CD4-positive, alpha-beta memory T cell (primary cell): ENCODE measurements at regions of chr3 and their contacts with region 1.

Region 1: DNA sequence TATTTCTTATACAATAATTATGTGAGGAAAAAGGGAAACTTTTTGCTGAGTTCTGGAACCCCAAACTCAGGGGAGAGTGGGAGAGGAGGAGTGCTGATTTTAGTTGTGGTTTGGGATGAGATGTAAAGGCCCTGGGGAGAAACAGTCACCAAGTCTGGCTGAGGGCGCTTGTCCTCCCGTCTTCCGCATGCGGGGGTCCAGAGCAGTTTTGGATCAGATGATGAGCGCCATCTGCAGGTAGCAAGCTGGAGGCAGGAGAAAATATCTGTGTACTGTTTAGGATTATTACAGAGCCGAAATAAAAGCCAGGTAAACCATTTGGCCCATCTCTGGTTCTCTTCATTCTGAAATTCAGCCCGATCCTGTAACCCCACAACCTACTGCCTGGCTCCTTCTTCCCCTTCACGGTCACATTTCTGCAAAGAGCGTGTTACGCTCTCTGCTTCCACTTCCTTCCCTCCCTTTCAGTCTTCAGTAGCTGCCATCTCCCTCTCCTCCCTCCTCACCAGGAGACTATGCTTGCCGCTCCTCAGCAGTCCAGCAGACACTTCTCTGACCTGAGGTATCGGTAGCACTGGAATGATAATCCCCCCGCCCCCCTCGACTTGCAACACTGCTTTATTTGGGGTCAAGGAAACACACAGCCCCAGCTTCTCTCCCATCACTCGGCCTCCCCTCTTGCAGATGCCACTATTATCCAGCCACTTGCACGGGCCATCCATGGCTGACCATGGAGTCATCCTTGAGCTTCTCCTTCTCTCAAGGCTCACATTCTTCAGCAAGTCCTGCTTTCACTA is 1.4 kb upstream of the PARP14 start:
- DNase-seq: peak; percentile 79 to 86 (median 79)
- H3K4me3 ChIP-seq: peak overlapping the region; percentile 81 to 89
- H3K4me3 Mint-ChIP-seq: peak overlapping the region; percentile 84 to 98 (median 96)
- H3K27ac ChIP-seq: peak overlapping the region; percentile 96
- H3K27ac Mint-ChIP-seq: peak overlapping the region; percentile 85 to 98 (median 97)
- H3K4me1 ChIP-seq: peaks cover 45% of the 10 kb centered on the region
- H3K4me1 Mint-ChIP-seq: peaks cover 38 to 61% (median 51%) of the 10 kb centered on the region in 4 donors
- H3K27me3 ChIP-seq: no peaks in the 10 kb centered on the region
- H3K27me3 Mint-ChIP-seq: no peaks in the 10 kb centered on the region

Region 2: GRCh38 chr3:122101646-122102045 is 577.6 kb before region 1 on chr3:
- CTCF ChIA-PET with region 1: no interaction called
- POLR2A ChIA-PET with region 1: no interaction called
- intact Hi-C with region 1: loop called (anchors 5 kb)
- DNase-seq: peak in 4 of 5 donors; percentile 58 to 67 (median 60)
- H3K4me3 ChIP-seq: no peak overlapping the region
- H3K4me3 Mint-ChIP-seq: peak overlapping the region in 1 of 8 donors; percentile 37
- H3K27ac ChIP-seq: no peak overlapping the region
- H3K27ac Mint-ChIP-seq: no peak overlapping the region
- H3K4me1 ChIP-seq: peaks cover 7% of the 10 kb centered on the region
- H3K4me1 Mint-ChIP-seq: peaks cover 8 to 18% (median 9%) of the 10 kb centered on the region in 4 donors
- H3K27me3 ChIP-seq: peaks cover 8% of the 10 kb centered on the region
- H3K27me3 Mint-ChIP-seq: no peaks in the 10 kb centered on the region

Region 3: DNA sequence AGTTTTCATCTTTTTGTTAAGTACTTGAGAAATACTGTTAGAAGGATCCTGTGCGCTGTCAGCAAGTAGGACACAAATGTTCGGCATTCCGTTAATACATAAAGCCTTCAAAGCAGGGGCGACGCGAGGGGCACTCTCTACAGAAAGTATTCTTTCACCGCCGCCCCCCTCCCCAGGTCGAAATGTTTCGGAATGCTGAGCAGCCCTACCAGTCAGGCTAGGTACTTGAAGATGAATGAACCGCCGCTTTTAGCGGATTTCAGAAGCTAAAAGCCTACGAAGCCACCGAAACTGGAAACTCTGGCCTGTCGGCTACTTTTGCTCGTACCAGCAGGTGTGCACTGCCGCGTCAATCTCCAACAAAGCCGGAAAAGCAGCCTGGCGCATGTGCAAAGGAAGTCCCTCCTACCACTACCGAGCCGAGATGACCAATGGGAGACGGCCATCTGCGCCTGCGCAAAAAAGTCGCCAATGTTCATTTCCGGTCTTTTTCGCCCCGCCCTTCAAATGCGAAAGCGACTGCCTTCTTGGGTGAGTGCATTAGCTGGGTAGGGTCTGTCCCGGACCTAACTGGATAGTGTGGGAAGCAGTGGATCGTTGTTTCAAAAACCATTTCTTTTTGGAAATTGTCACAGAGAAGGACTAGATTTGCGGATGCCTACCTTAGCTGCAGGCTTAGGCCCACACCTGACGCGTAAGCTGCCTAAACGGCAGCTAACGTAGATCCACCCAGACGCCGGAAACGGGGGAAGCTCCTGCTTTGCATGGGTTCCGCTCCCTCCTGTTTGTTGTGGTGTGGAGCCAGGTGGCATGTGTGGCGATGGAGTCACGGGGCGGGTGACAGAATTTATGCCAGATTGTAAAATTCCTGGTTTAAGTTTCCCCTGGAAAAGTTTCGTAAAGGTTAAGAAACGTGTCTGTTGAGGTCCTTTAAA is 263.3 kb before region 1 on chr3 and contains the start of gene WDR5B:
- CTCF ChIA-PET with region 1: interaction called, 16 read pairs
- POLR2A ChIA-PET with region 1: interaction called, 15 read pairs
- intact Hi-C with region 1: loop called (anchors 1 kb)
- DNase-seq: peak; percentile 98 to 99 (median 99)
- H3K4me3 ChIP-seq: peak within 1 kb of the TSS; percentile 61 to 63
- H3K4me3 Mint-ChIP-seq: peak within 1 kb of the TSS; percentile 96 to 100 (median 98)
- H3K27ac ChIP-seq: peak within 1 kb of the TSS; percentile 93
- H3K27ac Mint-ChIP-seq: peak within 1 kb of the TSS; percentile 97 to 100 (median 100)
- H3K4me1 ChIP-seq: peaks cover 35% of the 10 kb centered on the region
- H3K4me1 Mint-ChIP-seq: peaks cover 38 to 71% (median 49%) of the 10 kb centered on the region in 4 donors
- H3K27me3 ChIP-seq: no peaks in the 10 kb centered on the region
- H3K27me3 Mint-ChIP-seq: no peaks in the 10 kb centered on the region
- total RNA-seq, gene WDR5B: 19.2 to 19.4 TPM

Region 4: GRCh38 chr3:122466701-122467240 is 212.5 kb before region 1 on chr3:
- CTCF ChIA-PET with region 1: no interaction called
- POLR2A ChIA-PET with region 1: no interaction called
- intact Hi-C with region 1: no loop called
- DNase-seq: no peak
- H3K4me3 ChIP-seq: no peak overlapping the region
- H3K4me3 Mint-ChIP-seq: no peak overlapping the region
- H3K27ac ChIP-seq: no peak overlapping the region
- H3K27ac Mint-ChIP-seq: no peak overlapping the region
- H3K4me1 ChIP-seq: peaks cover 21% of the 10 kb centered on the region
- H3K4me1 Mint-ChIP-seq: peaks cover 18 to 40% (median 32%) of the 10 kb centered on the region in 4 donors
- H3K27me3 ChIP-seq: no peaks in the 10 kb centered on the region
- H3K27me3 Mint-ChIP-seq: no peaks in the 10 kb centered on the region

Region 5: DNA sequence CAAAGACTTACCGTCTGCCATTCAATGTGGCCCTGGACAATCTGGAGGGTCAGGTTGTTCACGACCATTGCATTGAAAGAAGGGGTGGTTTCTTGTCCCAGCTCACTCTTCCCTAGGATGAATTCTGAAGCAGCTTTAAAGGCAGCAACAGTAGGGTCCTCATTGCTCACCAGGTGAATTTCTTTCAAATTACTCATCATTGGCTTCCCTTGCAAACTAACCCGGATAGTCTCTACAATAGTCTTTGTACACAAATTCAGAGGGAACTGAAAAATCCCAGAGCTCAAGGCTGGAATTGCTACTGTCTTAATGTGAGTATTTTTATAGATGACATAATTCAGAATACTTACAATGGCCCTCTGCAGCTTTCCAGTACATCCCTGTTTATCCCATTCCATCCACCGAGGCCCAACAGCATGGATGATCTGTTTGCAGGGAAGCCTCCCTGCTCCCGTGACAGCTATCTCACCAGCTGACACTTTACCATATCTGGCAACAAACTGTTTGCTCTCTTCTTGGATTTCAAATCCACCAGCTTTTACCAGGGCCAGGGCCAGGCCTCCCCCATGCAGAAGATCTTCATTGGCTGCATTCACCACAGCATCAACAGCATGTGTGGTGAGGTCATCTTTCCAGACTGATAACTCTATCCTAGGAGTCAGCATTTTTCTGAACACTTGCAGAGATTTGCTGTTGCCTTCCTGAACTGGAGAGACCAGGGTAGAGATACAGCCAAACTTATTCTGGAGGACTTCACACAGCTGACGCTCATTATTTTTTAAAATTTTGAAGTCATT is 123.8 kb before region 1 on chr3:
- CTCF ChIA-PET with region 1: interaction called, 369 read pairs
- POLR2A ChIA-PET with region 1: interaction called, 30 read pairs
- intact Hi-C with region 1: loop called (anchors 1 kb)
- DNase-seq: no peak
- H3K4me3 ChIP-seq: no peak overlapping the region
- H3K4me3 Mint-ChIP-seq: no peak overlapping the region
- H3K27ac ChIP-seq: no peak overlapping the region
- H3K27ac Mint-ChIP-seq: peak overlapping the region in 1 of 7 donors; percentile 81
- H3K4me1 ChIP-seq: no peaks in the 10 kb centered on the region
- H3K4me1 Mint-ChIP-seq: peaks cover 16 to 26% (median 23%) of the 10 kb centered on the region in 4 donors
- H3K27me3 ChIP-seq: no peaks in the 10 kb centered on the region
- H3K27me3 Mint-ChIP-seq: no peaks in the 10 kb centered on the region

Region 6: DNA sequence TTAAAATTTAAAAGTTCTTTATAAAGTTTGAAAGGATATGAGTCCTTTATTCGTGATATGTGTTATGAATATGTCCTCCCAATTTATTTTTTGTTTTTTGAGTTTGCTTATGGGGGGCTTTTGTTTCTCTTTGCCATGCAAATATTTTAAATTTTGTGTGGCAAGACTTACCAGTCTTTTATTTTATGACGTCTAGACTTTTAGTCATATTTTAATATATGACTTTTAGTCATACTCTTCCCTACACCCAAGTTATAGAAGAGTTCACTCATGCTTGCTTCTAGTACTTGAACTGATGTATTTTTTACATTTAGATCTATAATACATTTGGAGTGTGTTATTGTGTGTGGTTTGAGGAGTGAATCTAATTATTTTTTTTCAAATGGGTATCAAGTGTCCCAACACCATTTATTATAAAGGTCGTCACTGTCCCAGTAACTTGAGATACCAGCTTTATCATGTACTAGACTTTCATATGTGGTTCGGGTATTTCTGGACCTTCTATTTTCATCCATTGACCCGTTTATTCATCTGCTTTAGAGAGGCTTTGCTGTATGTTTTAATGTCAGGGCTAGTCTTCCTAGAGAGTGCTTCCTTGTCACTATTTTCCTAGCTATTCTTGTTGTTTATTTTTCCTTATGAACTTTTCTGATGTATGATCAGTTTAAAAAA is 101.1 kb before region 1 on chr3:
- CTCF ChIA-PET with region 1: interaction called, 25 read pairs
- POLR2A ChIA-PET with region 1: interaction called, 13 read pairs
- intact Hi-C with region 1: loop called (anchors 1 kb)
- DNase-seq: no peak
- H3K4me3 ChIP-seq: peak overlapping the region; percentile 18 to 66
- H3K4me3 Mint-ChIP-seq: peak overlapping the region; percentile 99 to 100 (median 100)
- H3K27ac ChIP-seq: peak overlapping the region; percentile 57
- H3K27ac Mint-ChIP-seq: peak overlapping the region; percentile 53 to 99 (median 98)
- H3K4me1 ChIP-seq: peaks cover 44% of the 10 kb centered on the region
- H3K4me1 Mint-ChIP-seq: peaks cover 31 to 82% (median 44%) of the 10 kb centered on the region in 4 donors
- H3K27me3 ChIP-seq: no peaks in the 10 kb centered on the region
- H3K27me3 Mint-ChIP-seq: no peaks in the 10 kb centered on the region

Region 7: GRCh38 chr3:122668930-122669730 is 10.2 kb before region 1 on chr3:
- CTCF ChIA-PET with region 1: interaction called, 15 read pairs
- POLR2A ChIA-PET with region 1: no interaction called
- intact Hi-C with region 1: no loop called
- DNase-seq: peak in 1 of 5 donors; percentile 2
- H3K4me3 ChIP-seq: no peak overlapping the region
- H3K4me3 Mint-ChIP-seq: peak overlapping the region in 1 of 8 donors; percentile 28
- H3K27ac ChIP-seq: no peak overlapping the region
- H3K27ac Mint-ChIP-seq: no peak overlapping the region
- H3K4me1 ChIP-seq: no peaks in the 10 kb centered on the region
- H3K4me1 Mint-ChIP-seq: peaks cover 0 to 5% (median 0%) of the 10 kb centered on the region in 4 donors
- H3K27me3 ChIP-seq: no peaks in the 10 kb centered on the region
- H3K27me3 Mint-ChIP-seq: no peaks in the 10 kb centered on the region

Region 8: DNA sequence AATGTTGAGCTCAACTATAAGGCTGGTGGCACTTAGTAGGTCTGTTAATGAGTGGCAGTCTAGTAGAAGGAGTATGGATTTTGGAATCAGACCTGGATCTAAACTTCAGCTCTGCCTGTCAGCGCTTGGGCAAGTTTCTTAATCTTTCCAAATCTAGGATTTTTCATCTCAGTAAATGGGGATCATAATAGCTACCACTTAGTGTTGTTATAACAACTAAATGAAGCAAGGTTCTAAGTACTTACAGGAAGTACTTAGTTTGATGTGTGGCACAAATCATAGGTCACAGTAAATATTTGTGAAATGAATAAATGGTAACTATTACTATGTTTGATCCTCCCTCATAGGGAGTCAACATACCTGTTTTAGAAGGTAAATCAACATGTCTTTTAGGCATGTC is 147.0 kb after region 1 on chr3:
- CTCF ChIA-PET with region 1: no interaction called
- POLR2A ChIA-PET with region 1: no interaction called
- intact Hi-C with region 1: no loop called
- DNase-seq: no peak
- H3K4me3 ChIP-seq: no peak overlapping the region
- H3K4me3 Mint-ChIP-seq: no peak overlapping the region
- H3K27ac ChIP-seq: no peak overlapping the region
- H3K27ac Mint-ChIP-seq: no peak overlapping the region
- H3K4me1 ChIP-seq: no peaks in the 10 kb centered on the region
- H3K4me1 Mint-ChIP-seq: peaks cover 0 to 2% (median 0%) of the 10 kb centered on the region in 4 donors
- H3K27me3 ChIP-seq: no peaks in the 10 kb centered on the region
- H3K27me3 Mint-ChIP-seq: no peaks in the 10 kb centered on the region

Region 9: GRCh38 chr3:122969585-122970453 is 290.5 kb after region 1 on chr3:
- CTCF ChIA-PET with region 1: no interaction called
- POLR2A ChIA-PET with region 1: no interaction called
- intact Hi-C with region 1: no loop called
- DNase-seq: no peak
- H3K4me3 ChIP-seq: no peak overlapping the region
- H3K4me3 Mint-ChIP-seq: no peak overlapping the region
- H3K27ac ChIP-seq: no peak overlapping the region
- H3K27ac Mint-ChIP-seq: no peak overlapping the region
- H3K4me1 ChIP-seq: peaks cover 2% of the 10 kb centered on the region
- H3K4me1 Mint-ChIP-seq: peaks cover under 1 to 3% (median 1%) of the 10 kb centered on the region in 4 donors
- H3K27me3 ChIP-seq: no peaks in the 10 kb centered on the region
- H3K27me3 Mint-ChIP-seq: no peaks in the 10 kb centered on the region

Region 10: DNA sequence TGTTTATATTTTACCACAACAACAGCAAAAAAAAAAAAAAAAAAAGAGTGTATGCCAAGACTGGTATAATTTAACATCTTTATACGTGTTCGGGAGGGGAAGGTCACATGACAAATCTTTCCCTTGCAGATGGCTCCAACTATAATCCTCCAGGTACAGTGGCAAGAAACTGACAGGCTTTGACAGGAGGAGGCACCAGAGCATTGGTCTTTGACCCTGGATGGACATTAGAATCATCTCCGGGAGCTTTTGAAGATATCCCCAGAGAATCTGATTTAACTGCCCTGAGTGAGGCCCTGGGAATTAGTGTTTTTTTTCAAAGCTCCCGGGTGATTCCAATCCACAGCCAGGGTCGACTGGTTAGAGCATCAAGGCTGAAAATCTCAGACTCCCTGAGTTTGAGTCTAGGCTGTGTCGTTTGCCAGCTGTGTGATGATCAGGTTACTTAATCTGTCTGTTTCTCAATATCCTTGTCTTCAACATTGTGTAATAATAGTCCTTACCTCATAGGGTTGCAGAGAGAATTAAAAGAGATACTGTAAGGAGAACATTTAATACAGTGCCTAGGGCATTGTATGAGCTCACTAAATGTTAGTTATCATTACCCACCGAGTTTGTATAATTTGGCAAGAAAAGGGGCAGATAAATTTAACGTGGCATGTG is 357.2 kb after region 1 on chr3:
- CTCF ChIA-PET with region 1: no interaction called
- POLR2A ChIA-PET with region 1: no interaction called
- intact Hi-C with region 1: no loop called
- DNase-seq: no peak
- H3K4me3 ChIP-seq: no peak overlapping the region
- H3K4me3 Mint-ChIP-seq: no peak overlapping the region
- H3K27ac ChIP-seq: no peak overlapping the region
- H3K27ac Mint-ChIP-seq: no peak overlapping the region
- H3K4me1 ChIP-seq: no peaks in the 10 kb centered on the region
- H3K4me1 Mint-ChIP-seq: no peaks in the 10 kb centered on the region
- H3K27me3 ChIP-seq: peaks cover 12% of the 10 kb centered on the region
- H3K27me3 Mint-ChIP-seq: peaks cover 43 to 46% of the 10 kb centered on the region in 2 donors

Region 11: DNA sequence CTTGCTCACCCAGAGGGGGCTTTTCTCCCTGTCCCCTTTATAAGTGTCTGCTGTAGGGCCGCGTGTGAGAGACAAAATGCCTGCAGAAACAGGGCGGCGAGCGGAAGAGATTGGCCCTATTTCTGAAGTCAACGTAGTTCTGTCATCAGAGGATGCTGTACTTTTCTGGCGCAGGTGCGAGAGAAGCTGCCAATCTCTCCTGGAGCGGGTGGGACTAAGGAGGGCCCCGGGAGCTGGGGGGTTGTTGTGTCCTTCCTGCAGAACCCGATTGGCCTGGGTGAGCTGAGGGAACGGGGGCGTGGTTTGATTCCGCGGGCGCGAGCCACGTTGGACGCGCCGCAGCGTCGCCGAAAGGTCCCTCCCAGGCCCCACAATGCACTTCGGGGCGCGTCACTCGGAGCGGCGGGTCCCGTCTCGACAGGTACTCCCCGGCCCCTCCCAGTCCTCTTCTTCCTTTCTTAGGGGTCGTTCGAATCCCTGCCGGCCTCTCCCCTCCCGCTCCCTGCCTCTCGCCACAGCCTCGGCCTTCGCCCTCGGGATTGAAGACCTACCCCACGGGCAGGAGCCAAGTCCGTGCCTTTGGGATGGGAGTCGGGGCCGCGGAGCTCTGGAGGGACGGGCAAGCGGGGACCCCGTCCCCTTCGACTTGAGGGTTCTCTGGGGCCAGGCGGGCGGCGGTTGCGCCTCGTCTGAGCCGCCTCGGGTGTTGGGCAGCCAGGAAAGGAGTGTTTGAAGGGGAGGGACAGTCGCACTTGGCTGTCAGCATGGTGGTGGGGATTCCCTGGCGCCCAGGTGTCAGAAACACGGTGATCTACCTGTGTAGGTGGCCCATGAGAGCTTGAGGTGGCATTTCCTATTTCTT is 522.5 kb after region 1 on chr3 and contains the start of gene SEC22A:
- CTCF ChIA-PET with region 1: no interaction called
- POLR2A ChIA-PET with region 1: no interaction called
- intact Hi-C with region 1: loop called (anchors 1 kb)
- DNase-seq: peak; percentile 95 to 98 (median 98)
- H3K4me3 ChIP-seq: peak within 1 kb of the TSS; percentile 82 to 91
- H3K4me3 Mint-ChIP-seq: peak within 1 kb of the TSS; percentile 88 to 98 (median 90)
- H3K27ac ChIP-seq: peak within 1 kb of the TSS; percentile 98
- H3K27ac Mint-ChIP-seq: peak within 1 kb of the TSS; percentile 92 to 99 (median 98)
- H3K4me1 ChIP-seq: peaks cover 20% of the 10 kb centered on the region
- H3K4me1 Mint-ChIP-seq: peaks cover 21 to 38% (median 28%) of the 10 kb centered on the region in 4 donors
- H3K27me3 ChIP-seq: no peaks in the 10 kb centered on the region
- H3K27me3 Mint-ChIP-seq: peaks cover 0 to 4% of the 10 kb centered on the region in 2 donors
- total RNA-seq, gene SEC22A: 19.4 to 23.2 TPM